ENCODE measurements at regions of chr5 and their contacts with region 1.

Region 1: GRCh38 chr5:38540314-38540713 is 16.1 kb downstream of the LIFR start:
- DNase-seq: no peak
- H3K4me3 ChIP-seq: no peak overlapping the region
- H3K27ac ChIP-seq: no peak overlapping the region
- H3K4me1 ChIP-seq: peaks cover 0 to 5% of the 10 kb centered on the region in 2 experiments; a peak in 2 of 4 replicates
- H3K27me3 ChIP-seq: no peaks in the 10 kb centered on the region
- CTCF ChIP-seq: no peak
- EP300 ChIP-seq: no peak
- RAD21 ChIP-seq: no peak

Region 2: DNA sequence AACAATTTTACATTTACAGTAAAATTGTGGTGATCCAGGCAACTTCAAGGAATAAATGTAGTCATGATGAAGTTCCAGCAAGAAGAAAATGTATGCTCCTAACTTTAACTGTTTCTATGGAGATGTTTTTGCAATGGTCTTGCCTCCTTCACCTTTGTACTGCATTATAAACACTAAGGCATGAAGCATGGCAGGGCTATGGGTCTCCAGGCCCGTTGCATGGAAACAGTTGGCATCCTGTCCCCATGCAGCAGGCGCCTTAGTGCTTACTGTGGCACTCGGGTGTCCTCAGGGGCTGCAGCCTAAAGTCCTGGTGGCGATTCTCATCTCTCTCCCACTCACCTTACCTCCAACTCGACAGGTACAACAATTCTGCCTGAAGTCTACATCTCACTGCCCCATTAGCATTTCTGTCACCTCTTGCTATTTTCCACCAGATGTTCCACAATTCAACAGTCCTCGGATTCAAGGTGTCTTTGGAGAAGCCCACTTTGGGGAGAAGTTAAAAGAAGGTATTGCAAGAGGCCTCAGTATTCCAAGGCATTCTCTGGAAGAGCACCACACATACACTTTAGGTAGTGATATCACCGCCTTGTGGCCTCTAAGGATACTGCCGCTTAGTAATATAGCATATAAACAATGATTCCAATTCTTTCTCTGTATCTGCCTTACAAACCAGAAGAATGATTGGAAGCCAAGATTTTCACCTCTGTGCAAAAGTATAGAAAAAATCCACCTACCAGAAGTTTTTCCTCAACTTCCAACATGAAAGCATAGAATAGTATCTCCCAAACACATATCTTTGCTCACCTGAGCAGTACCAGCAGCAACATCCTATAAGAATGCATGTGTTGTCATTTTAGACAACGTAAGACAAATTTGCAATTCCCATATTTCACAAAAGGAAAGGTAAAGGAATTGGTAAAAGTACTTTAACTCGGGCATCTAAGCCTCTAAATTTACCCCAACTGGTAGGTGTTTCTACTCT is 11.0 kb after region 1 on chr5:
- CTCF ChIA-PET with region 1: interaction called, 12 read pairs
- POLR2A ChIA-PET with region 1: no interaction called
- DNase-seq: peak; percentile 52
- H3K4me3 ChIP-seq: peak overlapping the region in 1 of 2 experiments; percentile 6; a peak in 1 of 4 replicates
- H3K27ac ChIP-seq: no peak overlapping the region
- H3K4me1 ChIP-seq: peaks cover 0 to 14% of the 10 kb centered on the region in 2 experiments; a peak in 3 of 4 replicates
- H3K27me3 ChIP-seq: no peaks in the 10 kb centered on the region
- CTCF ChIP-seq: peak; percentile 72
- EP300 ChIP-seq: no peak
- RAD21 ChIP-seq: peak; percentile 66

Measured in SK-N-SH (cell line).